GM13976 (cell line): ENCODE measurements at regions of chr11 and their contacts with region 1.

Region 1: GRCh38 chr11:16605894-16606783 is 132.3 kb upstream of the C11orf58 start:
- DNase-seq: peak; percentile 88
- CTCF ChIP-seq: peak; percentile 88

Region 2: DNA sequence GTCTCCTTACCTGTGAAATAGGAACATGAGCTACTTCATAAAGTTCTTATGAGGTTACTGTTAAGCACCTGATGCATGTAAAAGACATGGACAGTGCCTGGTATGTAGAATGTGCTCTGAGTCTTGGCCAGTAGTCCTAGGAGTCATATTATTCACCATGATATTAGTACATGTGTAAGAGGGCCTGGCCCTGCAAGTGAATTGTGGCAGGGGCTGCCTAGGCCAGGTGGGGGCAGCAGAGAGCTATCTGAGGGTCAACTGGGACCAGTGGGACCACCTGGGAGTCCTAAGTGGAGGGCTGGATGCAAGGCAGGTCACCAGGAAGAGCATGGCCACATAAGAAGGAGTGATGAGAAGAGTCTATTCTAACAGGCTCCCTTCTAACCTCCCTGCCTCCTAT is 779.3 kb before region 1 on chr11:
- in situ Hi-C with region 1: loop called (anchors 25 kb)
- DNase-seq: peak; percentile 13
- CTCF ChIP-seq: peak; percentile 36

Region 3: DNA sequence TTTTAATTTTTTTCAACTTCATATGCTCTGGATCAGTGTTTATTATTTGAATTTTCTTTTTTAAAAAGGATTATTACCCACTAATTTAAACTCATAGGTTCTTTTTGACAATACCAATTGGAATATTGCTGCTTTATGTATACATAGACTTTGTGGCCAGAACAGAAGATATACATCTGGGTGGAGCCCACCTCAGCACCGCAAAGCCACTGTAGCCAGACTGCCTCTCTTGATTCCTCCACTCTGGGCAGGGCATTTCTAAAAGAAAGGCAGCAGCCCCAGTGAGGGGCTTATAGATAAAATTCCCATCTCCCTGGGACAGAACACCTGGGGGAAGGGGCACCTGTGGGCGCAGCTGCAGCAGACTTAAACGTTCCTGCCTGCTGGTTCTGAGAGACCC is 121.7 kb after region 1 on chr11:
- in situ Hi-C with region 1: no loop called
- DNase-seq: no peak
- CTCF ChIP-seq: no peak